ENCODE measurements at regions of chr12 and their contacts with region 1.

Region 1: DNA sequence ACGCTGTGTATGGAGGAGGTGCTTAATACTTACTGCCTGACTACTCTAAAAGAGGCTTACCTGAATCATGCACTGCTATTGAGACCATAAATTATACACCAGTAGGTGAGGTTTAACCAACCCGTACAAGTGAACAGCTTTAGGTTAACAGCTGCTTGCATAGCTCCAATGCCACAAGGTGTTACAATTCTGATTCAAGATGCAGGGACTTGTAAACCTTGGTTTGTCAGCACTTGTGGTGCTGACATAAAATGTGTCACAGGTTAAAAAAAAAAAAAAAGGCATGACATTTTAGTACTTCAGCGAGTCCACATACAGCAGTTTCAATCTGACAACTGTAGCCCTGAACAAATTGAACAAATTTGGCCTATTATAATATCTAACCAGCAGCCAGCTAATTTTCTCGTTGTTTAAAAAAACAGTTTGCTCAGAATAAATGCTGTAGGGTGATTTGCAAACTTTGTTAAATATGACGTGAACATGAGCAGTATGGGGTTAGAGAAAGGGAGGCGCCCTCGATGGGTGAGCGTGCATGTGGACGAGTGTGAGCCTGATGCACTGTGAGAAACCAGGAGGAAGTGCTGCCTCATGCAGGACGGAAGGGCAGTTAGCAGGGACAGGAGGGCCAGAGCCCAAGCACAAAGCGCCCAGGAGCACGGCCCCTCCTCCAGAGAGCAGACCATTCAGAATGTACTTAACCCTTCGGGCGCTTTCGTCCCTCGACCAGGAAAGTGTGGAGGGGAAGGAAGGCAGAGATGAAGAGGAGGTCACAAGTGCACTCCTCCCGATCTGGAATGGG is 44.7 kb downstream of the TCHP start:
- DNase-seq: no peak
- ATAC-seq: no peak
- H3K4me3 ChIP-seq: no peak overlapping the region
- H3K27ac ChIP-seq: no peak overlapping the region
- H3K4me1 ChIP-seq: peaks cover 27 to 39% (median 34%) of the 10 kb centered on the region in 3 donors
- H3K27me3 ChIP-seq: no peaks in the 10 kb centered on the region
- CTCF ChIP-seq: no peak

Region 2: GRCh38 chr12:109563291-109564284 is 381.2 kb before region 1 on chr12:
- intact Hi-C with region 1: no loop called
- DNase-seq: no peak
- ATAC-seq: peak in 1 of 4 donors; percentile 23
- H3K4me3 ChIP-seq: no peak overlapping the region
- H3K27ac ChIP-seq: no peak overlapping the region
- H3K4me1 ChIP-seq: no peaks in the 10 kb centered on the region
- H3K27me3 ChIP-seq: no peaks in the 10 kb centered on the region
- CTCF ChIP-seq: no peak

Region 3: DNA sequence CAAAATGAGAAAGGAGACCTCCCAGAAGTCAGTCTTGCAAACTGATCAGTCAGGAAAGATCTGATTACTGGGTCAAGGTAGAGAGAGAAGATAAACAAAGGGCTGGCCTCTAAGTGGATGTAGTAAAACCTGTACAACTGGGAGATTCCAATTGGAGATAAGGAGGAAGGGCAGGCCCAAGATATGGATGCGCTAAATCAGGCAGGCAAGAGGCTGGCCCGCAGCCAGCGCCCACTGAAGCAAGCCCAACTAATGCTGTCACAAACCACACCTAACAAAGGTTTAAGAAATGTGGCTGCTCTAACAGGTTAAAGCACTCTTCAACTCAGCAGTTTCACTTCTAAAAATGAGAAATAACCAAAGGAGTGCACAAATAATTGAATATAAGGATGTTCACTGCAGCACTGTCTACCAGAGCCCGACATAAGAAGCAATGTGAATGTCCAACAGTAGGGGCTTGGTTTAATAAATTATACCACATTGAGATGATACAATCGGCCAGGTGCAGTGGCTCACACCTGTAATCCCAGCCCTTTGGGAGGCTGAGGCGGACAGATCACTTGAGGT is 69.1 kb before region 1 on chr12:
- intact Hi-C with region 1: no loop called
- DNase-seq: no peak
- ATAC-seq: no peak
- H3K4me3 ChIP-seq: no peak overlapping the region
- H3K27ac ChIP-seq: no peak overlapping the region
- H3K4me1 ChIP-seq: peaks cover 6 to 13% (median 7%) of the 10 kb centered on the region in 3 donors
- H3K27me3 ChIP-seq: no peaks in the 10 kb centered on the region
- CTCF ChIP-seq: no peak

Region 4: GRCh38 chr12:109995686-109996482 is 51.1 kb after region 1 on chr12 and contains the start of gene GIT2:
- intact Hi-C with region 1: loop called in 1 of 3 experiments (anchors 10 kb)
- DNase-seq: peak; percentile 93 to 98 (median 94)
- ATAC-seq: peak; percentile 80 to 90 (median 85)
- H3K4me3 ChIP-seq: peak within 1 kb of the TSS; percentile 69 to 99 (median 84)
- H3K27ac ChIP-seq: peak within 1 kb of the TSS; percentile 69 to 87 (median 81)
- H3K4me1 ChIP-seq: peaks cover 6 to 35% (median 12%) of the 10 kb centered on the region in 3 donors
- H3K27me3 ChIP-seq: no peaks in the 10 kb centered on the region
- CTCF ChIP-seq: no peak
- total RNA-seq, gene GIT2: 24.7 to 38.8 (median 33.6) TPM

Measured in pancreas (tissue), 10 donors.